Activated CD4-positive, alpha-beta memory T cell treated with anti-CD3 and anti-CD28 coated beads for 36 hours (primary cell): ENCODE measurements at regions of chr2 and their contacts with region 1.

Region 1: GRCh38 chr2:197378494-197379307 is 56.1 kb downstream of the SF3B1 start:
- DNase-seq: peak; percentile 72
- H3K4me3 Mint-ChIP-seq: no peak overlapping the region
- H3K27ac Mint-ChIP-seq: no peak overlapping the region
- H3K4me1 Mint-ChIP-seq: peaks cover 15% of the 10 kb centered on the region
- H3K27me3 Mint-ChIP-seq: peaks cover 4% of the 10 kb centered on the region

Region 2: GRCh38 chr2:196926562-196927375 is 451.9 kb before region 1 on chr2 and contains the start of gene PGAP1:
- CTCF ChIA-PET with region 1: no interaction called
- POLR2A ChIA-PET with region 1: no interaction called
- intact Hi-C with region 1: no loop called
- DNase-seq: peak; percentile 93
- H3K4me3 Mint-ChIP-seq: peak within 1 kb of the TSS; percentile 96
- H3K27ac Mint-ChIP-seq: peak within 1 kb of the TSS; percentile 100
- H3K4me1 Mint-ChIP-seq: peaks cover 35% of the 10 kb centered on the region
- H3K27me3 Mint-ChIP-seq: peaks cover 4% of the 10 kb centered on the region
- total RNA-seq, gene PGAP1: 24.5 to 25.5 TPM

Region 3: DNA sequence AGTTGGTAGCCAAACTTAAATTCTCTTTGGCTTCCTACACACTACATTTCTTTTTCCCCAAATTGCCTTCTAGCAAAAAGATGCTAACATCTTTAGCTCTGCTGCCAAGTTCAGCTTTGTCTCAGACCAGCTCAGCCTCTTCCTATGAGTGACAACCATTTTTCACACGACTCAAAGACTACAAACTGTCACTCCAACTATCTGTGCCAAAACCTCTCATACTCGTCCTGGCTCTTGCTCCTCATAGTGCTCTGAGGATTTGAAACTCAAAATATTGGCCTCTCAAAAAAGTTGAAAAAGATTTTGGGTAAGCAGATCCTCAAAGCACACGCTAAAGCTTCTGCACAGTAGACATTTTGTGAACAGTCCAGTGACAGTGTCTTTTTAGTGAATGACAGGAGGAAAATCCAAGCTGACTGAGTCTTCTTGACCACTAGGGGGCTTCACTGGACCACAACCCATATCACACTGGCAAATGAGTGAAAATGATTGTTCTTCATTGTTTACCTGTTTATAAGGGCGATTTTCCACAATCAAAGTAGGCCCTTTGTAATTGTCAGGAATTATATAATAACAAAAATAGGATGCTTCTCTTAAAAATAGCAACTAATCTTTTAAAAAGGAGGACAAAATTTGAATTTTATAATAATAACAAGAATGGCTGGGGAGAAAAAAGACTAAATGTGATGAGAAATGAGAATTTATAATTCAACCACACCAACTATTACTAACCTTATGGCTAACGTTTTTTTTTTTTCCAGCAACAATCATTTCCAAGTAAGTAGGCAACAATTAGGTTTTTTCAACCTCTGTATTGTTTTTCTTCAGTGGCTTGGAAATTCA is 366.7 kb before region 1 on chr2:
- CTCF ChIA-PET with region 1: interaction called, 4 read pairs
- POLR2A ChIA-PET with region 1: no interaction called
- intact Hi-C with region 1: loop called (anchors 1 kb)
- DNase-seq: peak; percentile 20
- H3K4me3 Mint-ChIP-seq: no peak overlapping the region
- H3K27ac Mint-ChIP-seq: peak overlapping the region; percentile 26
- H3K4me1 Mint-ChIP-seq: no peaks in the 10 kb centered on the region
- H3K27me3 Mint-ChIP-seq: no peaks in the 10 kb centered on the region

Region 4: GRCh38 chr2:197075759-197076337 is 302.9 kb before region 1 on chr2:
- CTCF ChIA-PET with region 1: interaction called, 9 read pairs
- POLR2A ChIA-PET with region 1: no interaction called
- intact Hi-C with region 1: loop called (anchors 1 kb)
- DNase-seq: no peak
- H3K4me3 Mint-ChIP-seq: no peak overlapping the region
- H3K27ac Mint-ChIP-seq: no peak overlapping the region
- H3K4me1 Mint-ChIP-seq: peaks cover 36% of the 10 kb centered on the region
- H3K27me3 Mint-ChIP-seq: no peaks in the 10 kb centered on the region

Region 5: DNA sequence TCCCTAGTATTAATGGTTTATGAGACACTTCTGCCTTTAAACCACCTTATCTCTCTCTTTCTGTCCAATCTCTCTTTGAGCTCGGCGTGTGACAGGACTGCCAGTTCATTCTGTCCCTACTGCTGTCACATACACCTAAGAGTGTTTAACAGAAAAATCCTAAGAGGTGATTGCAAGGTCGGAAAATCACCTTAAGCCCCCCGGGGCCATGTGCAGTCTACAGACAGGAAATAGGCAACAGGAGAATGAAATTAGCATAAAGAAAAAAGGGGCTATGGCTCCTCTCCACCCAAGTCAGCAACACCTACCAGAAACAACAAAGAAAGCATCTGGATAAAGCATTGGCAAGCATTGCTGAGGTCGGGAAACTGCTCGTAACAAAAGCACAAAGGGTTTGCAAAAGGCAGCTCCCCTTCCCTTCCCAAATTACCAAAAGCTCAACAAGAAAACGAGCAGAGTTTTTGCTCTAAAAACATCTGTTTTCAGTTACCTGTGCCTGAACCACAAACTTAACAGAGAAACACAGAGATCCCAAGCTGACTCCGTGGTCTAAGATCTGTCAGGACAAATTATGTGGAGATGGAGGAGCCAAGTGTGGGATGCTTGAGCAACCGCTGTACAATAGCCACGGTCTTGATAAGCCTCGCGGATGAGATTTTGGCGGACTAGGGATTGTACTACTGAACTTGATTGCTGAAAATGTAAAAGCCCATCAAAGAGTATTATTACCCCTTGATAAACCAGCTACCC is 98.5 kb before region 1 on chr2:
- CTCF ChIA-PET with region 1: no interaction called
- POLR2A ChIA-PET with region 1: no interaction called
- intact Hi-C with region 1: no loop called
- DNase-seq: no peak
- H3K4me3 Mint-ChIP-seq: peak overlapping the region; percentile 20
- H3K27ac Mint-ChIP-seq: peak overlapping the region; percentile 72
- H3K4me1 Mint-ChIP-seq: peaks cover 75% of the 10 kb centered on the region
- H3K27me3 Mint-ChIP-seq: no peaks in the 10 kb centered on the region

Region 6: GRCh38 chr2:197777823-197778407 is 399.2 kb after region 1 on chr2:
- CTCF ChIA-PET with region 1: no interaction called
- POLR2A ChIA-PET with region 1: no interaction called
- intact Hi-C with region 1: loop called (anchors 2 kb)
- DNase-seq: no peak
- H3K4me3 Mint-ChIP-seq: no peak overlapping the region
- H3K27ac Mint-ChIP-seq: no peak overlapping the region
- H3K4me1 Mint-ChIP-seq: no peaks in the 10 kb centered on the region
- H3K27me3 Mint-ChIP-seq: peaks cover 5% of the 10 kb centered on the region